ENCODE measurements at regions of chr7 and their contacts with region 1.

Region 1: DNA sequence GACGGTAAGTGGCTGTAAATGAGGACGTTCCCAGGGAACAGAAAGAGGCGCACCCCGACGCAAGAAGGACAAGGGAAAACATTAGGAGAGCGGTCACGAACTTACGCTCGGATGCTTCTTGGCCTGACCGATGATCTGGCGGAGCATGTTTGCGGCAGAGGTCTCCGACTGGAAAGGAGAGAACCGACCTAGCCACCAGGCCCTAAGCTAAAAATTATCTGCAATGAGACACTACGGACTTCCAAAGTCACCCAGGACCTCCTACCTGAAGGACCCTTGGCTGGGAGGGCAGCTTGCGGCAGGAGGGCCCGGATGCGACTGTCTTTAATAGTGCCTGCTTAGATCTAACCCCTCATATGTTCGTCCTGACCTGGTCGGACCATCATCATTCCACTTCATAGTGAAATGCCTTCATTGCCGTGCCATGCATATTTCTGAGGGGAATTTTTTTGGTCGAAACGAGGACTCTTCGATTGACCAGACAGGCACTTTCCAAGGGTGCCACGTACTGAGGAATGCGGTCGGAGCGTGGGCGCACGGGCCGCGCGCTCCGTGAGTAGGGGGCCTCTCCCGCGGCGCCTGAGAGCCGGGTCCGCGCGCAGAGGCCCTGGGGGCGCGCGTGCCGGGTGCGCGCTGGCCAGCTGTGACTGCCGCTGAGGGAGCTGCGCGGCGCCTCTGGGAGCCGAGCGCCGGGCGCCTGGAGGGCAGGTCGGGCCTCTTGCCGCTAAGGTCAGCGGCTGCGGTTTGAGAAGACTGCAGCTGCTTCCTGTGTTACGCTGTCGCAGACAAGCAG is 33.6 kb upstream of the PHF14 start:
- ATAC-seq: peak; percentile 90 to 97 (median 96)
- H3K4me3 ChIP-seq: peak overlapping the region; percentile 79 to 91 (median 81)
- H3K27ac ChIP-seq: peak overlapping the region; percentile 100
- H3K4me1 ChIP-seq: peaks cover 6 to 18% of the 10 kb centered on the region in 2 donors

Region 2: GRCh38 chr7:10677211-10677610 is 262.9 kb before region 1 on chr7:
- in situ Hi-C with region 1: no loop called
- ATAC-seq: no peak
- H3K4me3 ChIP-seq: no peak overlapping the region
- H3K27ac ChIP-seq: no peak overlapping the region
- H3K4me1 ChIP-seq: no peaks in the 10 kb centered on the region

Region 3: DNA sequence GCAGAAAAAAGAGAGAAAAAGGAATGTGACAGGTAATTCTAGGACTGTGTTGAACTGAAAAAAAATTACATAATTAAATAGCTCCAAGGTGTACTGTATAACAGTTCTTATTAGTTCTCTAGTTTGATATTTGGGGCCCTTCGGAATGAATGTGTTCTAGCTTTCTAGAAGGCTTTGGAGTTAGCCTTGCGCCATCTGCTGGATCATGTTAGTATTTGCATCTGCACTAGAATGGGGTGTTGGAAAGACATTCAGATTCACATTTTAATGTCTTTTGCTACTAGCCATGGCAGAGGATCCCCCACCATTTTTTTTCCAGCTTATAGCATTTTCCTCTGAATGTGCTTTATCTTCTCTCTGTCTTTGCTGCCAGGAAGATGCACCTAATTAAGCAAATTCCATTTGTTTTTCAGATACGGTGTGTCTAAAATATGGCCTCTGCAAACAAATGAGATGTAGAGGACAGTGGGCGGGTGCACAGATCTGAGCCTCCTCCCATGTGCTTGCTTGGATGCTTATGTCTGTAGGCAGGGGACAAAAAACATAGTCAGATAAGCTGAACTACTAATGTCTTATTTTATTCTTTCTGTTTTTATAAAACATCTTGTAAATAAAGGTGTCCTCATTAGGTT is 272.1 kb after region 1 on chr7:
- in situ Hi-C with region 1: loop called in 1 of 9 experiments (anchors 25 kb)
- ATAC-seq: peak; percentile 20 to 95 (median 68)
- H3K4me3 ChIP-seq: no peak overlapping the region
- H3K27ac ChIP-seq: no peak overlapping the region
- H3K4me1 ChIP-seq: peaks cover 11 to 39% of the 10 kb centered on the region in 2 donors

Region 4: GRCh38 chr7:11261519-11261958 is 321.4 kb after region 1 on chr7:
- in situ Hi-C with region 1: no loop called
- ATAC-seq: peak in 1 of 8 experiments; percentile 45
- H3K4me3 ChIP-seq: no peak overlapping the region
- H3K27ac ChIP-seq: no peak overlapping the region
- H3K4me1 ChIP-seq: no peaks in the 10 kb centered on the region

Region 5: DNA sequence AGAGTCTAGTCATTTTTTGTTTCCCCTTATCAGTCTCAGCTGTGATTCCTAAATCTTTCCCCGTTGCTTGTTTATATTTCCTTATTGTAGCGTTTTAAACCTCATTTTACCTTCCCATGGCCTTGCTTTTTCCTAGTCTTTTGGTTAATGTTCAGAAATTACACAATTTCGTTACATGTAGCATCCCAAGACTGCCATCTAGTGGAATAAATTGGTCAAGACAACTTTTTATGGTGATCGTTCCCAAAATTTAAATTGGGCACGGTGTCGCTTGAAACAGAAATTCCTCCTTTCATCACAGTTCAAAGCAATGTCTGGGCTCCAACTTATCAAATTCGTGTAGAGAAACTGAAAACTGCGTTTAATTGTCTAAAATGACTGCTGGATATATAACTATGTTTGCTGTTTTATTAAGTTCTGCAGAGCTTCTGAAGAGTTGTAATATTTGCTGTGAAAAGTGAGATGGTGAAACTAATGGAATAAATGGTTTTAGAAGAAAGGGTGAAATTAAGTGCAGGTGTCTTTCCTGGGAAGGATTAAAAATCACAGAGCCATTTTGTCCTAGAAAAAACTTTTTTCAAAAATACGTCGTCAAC is 403.8 kb after region 1 on chr7:
- in situ Hi-C with region 1: loop called in 3 of 9 experiments (anchors 25 kb)
- ATAC-seq: peak in 4 of 8 experiments; percentile 21 to 48 (median 30)
- H3K4me3 ChIP-seq: no peak overlapping the region
- H3K27ac ChIP-seq: no peak overlapping the region
- H3K4me1 ChIP-seq: peaks cover 5 to 30% of the 10 kb centered on the region in 2 donors

Region 6: GRCh38 chr7:12357508-12357907 is 1417.4 kb after region 1 on chr7:
- in situ Hi-C with region 1: no loop called
- ATAC-seq: peak in 1 of 8 experiments; percentile 24
- H3K4me3 ChIP-seq: no peak overlapping the region
- H3K27ac ChIP-seq: no peak overlapping the region
- H3K4me1 ChIP-seq: no peaks in the 10 kb centered on the region

Measured in motor neuron (in vitro differentiated cells).